PC-3 (cell line): ENCODE measurements at regions of chr12 and their contacts with region 1.

Region 1: GRCh38 chr12:42961395-42961794 is 371.8 kb upstream of the PRICKLE1 start:
- DNase-seq: peak; percentile 97
- ATAC-seq: peak; percentile 49
- H3K4me3 ChIP-seq: no peak overlapping the region
- H3K27ac ChIP-seq: peak overlapping the region; percentile 78
- H3K4me1 ChIP-seq: peaks cover 85% of the 10 kb centered on the region
- H3K27me3 ChIP-seq: no peaks in the 10 kb centered on the region
- CTCF ChIP-seq: no peak

Region 2: GRCh38 chr12:42660968-42661937 is 300.1 kb before region 1 on chr12:
- CTCF ChIA-PET with region 1: no interaction called
- POLR2A ChIA-PET with region 1: no interaction called
- intact Hi-C with region 1: loop called (anchors 5 kb)
- DNase-seq: peak; percentile 24
- ATAC-seq: peak; percentile 66
- H3K4me3 ChIP-seq: no peak overlapping the region
- H3K27ac ChIP-seq: no peak overlapping the region
- H3K4me1 ChIP-seq: peaks cover 8% of the 10 kb centered on the region
- H3K27me3 ChIP-seq: no peaks in the 10 kb centered on the region
- CTCF ChIP-seq: no peak

Region 3: GRCh38 chr12:42725841-42726240 is 235.6 kb before region 1 on chr12:
- CTCF ChIA-PET with region 1: no interaction called
- POLR2A ChIA-PET with region 1: no interaction called
- intact Hi-C with region 1: loop called (anchors 1 kb)
- DNase-seq: peak; percentile 80
- ATAC-seq: peak; percentile 66
- H3K4me3 ChIP-seq: no peak overlapping the region
- H3K27ac ChIP-seq: no peak overlapping the region
- H3K4me1 ChIP-seq: peaks cover 41% of the 10 kb centered on the region
- H3K27me3 ChIP-seq: no peaks in the 10 kb centered on the region
- CTCF ChIP-seq: no peak

Region 4: GRCh38 chr12:42887657-42888056 is 73.7 kb before region 1 on chr12:
- CTCF ChIA-PET with region 1: no interaction called
- POLR2A ChIA-PET with region 1: no interaction called
- intact Hi-C with region 1: loop called (anchors 2 kb)
- DNase-seq: peak; percentile 68
- ATAC-seq: peak; percentile 90
- H3K4me3 ChIP-seq: no peak overlapping the region
- H3K27ac ChIP-seq: peak overlapping the region; percentile 57
- H3K4me1 ChIP-seq: peaks cover 15% of the 10 kb centered on the region
- H3K27me3 ChIP-seq: no peaks in the 10 kb centered on the region
- CTCF ChIP-seq: no peak

Region 5: DNA sequence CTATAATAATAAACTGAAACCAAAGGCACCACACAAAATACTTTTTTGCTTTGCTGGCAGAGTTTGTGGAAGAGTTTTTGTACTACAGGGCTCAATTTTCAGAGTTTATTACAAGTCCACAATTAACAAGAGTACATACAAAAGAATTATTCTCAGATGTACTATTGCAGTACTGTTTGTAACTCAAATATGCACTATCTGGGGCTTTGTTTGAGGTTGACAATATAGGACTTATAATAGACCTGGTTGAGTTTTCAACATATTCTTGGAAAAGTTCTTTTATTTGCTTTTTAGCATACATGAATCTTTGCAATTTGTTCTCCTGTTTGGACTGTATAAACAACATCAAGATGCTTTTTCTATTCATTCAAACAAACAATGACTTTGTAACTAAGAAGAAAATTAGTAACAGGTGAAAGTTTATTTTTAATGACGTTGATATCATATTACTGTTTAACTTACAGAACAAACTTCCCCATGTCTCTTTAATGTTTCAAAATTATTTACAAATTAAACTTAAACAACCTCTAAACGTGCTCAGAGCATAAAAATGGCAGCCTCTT is 35.6 kb after region 1 on chr12:
- CTCF ChIA-PET with region 1: no interaction called
- POLR2A ChIA-PET with region 1: interaction called, 3 read pairs
- intact Hi-C with region 1: loop called (anchors 1 kb)
- DNase-seq: peak; percentile 31
- ATAC-seq: peak; percentile 73
- H3K4me3 ChIP-seq: no peak overlapping the region
- H3K27ac ChIP-seq: peak overlapping the region; percentile 37
- H3K4me1 ChIP-seq: peaks cover 17% of the 10 kb centered on the region
- H3K27me3 ChIP-seq: no peaks in the 10 kb centered on the region
- CTCF ChIP-seq: no peak

Region 6: DNA sequence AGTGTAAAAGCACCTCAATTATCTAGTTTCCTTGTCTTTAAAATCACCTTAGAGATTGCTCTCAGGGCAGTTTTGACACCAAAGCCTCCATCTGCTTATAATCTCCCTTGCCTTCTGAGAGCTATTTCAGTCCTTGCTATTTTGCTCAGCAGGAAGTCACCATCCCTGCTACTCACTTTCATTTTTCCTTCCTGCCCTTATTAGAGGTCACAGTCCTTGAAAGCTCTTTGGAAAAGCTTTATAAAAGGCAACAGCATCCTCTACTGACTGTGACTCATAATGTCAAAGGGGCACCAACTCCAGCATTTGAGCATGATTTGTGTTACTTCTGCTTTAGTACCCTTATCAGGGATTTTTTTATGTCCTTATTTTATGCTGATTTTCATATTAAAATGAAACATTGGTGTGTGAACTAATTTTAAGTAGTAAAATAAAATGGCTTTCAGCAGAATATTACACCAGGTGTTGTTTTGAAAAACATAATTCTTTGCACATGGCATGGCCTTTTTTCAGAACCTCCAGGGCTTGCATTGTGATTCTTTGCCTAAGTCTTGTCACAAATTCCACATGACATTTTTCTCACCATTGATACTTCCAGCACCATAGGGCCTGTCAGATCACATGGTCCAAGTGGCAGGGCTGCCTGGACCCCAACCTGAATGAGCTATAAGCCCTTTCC is 377.6 kb after region 1 on chr12:
- CTCF ChIA-PET with region 1: no interaction called
- POLR2A ChIA-PET with region 1: no interaction called
- intact Hi-C with region 1: loop called (anchors 2 kb)
- DNase-seq: peak; percentile 70
- ATAC-seq: peak; percentile 82
- H3K4me3 ChIP-seq: no peak overlapping the region; the same call in 1 of the 2 replicates
- H3K27ac ChIP-seq: peak overlapping the region; percentile 15; the same call in 1 of the 2 replicates
- H3K4me1 ChIP-seq: peaks cover 25% of the 10 kb centered on the region
- H3K27me3 ChIP-seq: no peaks in the 10 kb centered on the region
- CTCF ChIP-seq: peak; percentile 73